ENCODE measurements at regions of chr6 and their contacts with region 1.

Region 1: DNA sequence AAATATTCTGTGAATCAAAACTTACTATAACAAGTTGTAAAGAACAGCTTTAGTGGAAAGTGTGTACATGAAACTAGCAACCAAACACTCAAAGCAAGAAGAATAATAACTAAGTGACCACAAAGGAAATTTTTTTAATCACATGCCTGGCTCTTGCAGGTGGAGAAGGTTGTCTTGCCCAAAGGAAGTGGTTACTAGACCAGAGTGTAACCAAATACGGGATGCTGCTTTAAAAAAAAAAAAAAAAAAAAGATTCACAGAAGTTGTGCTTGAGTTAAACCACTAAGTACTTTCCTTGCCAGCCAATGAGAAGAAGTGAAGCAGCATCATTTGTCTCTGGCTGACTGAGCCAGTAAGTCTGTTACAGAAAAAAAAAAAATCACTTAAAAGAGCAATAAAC is 19.1 kb upstream of the HLA-DQB1 start:
- DNase-seq: peak; percentile 17
- ATAC-seq: peak; percentile 91
- H3K4me3 Mint-ChIP-seq: no peak overlapping the region
- H3K27ac Mint-ChIP-seq: no peak overlapping the region
- H3K4me1 Mint-ChIP-seq: peaks cover 25% of the 10 kb centered on the region
- H3K27me3 Mint-ChIP-seq: no peaks in the 10 kb centered on the region

Region 2: DNA sequence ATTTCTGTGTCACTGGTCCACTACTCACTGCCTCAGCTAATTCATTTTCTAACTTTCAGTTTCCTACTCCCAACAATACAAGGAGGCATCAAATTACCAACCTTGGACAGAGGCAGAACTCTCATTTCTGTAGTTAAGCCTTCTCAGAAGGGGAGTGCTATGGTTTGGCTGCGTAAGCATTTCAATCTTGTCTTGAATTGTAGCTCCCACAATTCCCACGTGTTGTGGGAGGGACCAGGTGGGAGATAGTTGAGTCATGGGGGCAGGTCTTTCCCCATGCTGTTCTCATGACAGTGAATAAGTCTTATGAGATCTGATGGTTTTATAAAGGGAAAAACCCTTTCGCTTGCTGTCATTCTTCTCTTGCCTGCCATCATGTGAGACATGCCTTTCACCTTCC is 223.0 kb before region 1 on chr6:
- CTCF ChIA-PET with region 1: no interaction called
- POLR2A ChIA-PET with region 1: no interaction called
- intact Hi-C with region 1: loop called in 1 of 2 experiments (anchors 1 kb)
- DNase-seq: peak; percentile 82
- ATAC-seq: peak; percentile 98
- H3K4me3 Mint-ChIP-seq: no peak overlapping the region
- H3K27ac Mint-ChIP-seq: peak overlapping the region; percentile 42
- H3K4me1 Mint-ChIP-seq: peaks cover 6% of the 10 kb centered on the region
- H3K27me3 Mint-ChIP-seq: peaks cover 46% of the 10 kb centered on the region

Region 3: GRCh38 chr6:32609731-32610640 is 75.6 kb before region 1 on chr6:
- CTCF ChIA-PET with region 1: no interaction called
- POLR2A ChIA-PET with region 1: no interaction called
- intact Hi-C with region 1: no loop called
- DNase-seq: peak; percentile 60
- ATAC-seq: peak; percentile 98
- H3K4me3 Mint-ChIP-seq: no peak overlapping the region
- H3K27ac Mint-ChIP-seq: no peak overlapping the region
- H3K4me1 Mint-ChIP-seq: peaks cover 16% of the 10 kb centered on the region
- H3K27me3 Mint-ChIP-seq: peaks cover 6% of the 10 kb centered on the region

Region 4: GRCh38 chr6:32666420-32667300 is 18.9 kb before region 1 on chr6 and contains the start of gene HLA-DQB1:
- CTCF ChIA-PET with region 1: no interaction called
- POLR2A ChIA-PET with region 1: no interaction called
- intact Hi-C with region 1: loop called in 1 of 2 experiments (anchors 1 kb)
- DNase-seq: peak; percentile 60
- ATAC-seq: peak; percentile 81
- H3K4me3 Mint-ChIP-seq: peak within 1 kb of the TSS; percentile 68
- H3K27ac Mint-ChIP-seq: peak within 1 kb of the TSS; percentile 58
- H3K4me1 Mint-ChIP-seq: peaks cover 44% of the 10 kb centered on the region
- H3K27me3 Mint-ChIP-seq: peaks cover 18% of the 10 kb centered on the region
- total RNA-seq, gene HLA-DQB1: 2.3 to 3.1 TPM

Region 5: DNA sequence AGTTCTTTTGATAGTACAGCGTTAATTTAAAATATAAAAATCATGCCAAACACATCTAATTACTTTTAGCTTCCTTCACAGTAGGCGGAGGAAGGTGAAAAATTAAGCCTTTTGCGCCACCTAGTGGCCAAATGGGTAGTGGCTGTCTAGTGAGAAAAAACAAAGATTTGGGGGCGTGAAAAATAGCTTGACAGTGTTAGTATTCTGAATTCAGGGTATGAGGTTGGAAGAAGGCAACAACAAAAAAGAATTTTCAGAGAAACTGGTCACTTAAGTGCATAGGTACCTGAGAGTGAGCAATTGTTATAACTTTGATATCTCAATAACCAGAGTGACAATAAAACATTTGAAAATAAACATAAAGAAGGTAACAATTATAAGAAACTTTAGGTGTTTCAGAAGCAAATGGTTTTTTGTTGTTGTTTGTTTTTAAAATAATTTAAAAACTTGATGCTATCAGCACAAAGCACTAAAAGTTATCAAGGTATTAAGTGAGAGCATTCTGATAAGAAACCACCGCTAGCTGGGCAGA is 182.7 kb after region 1 on chr6:
- CTCF ChIA-PET with region 1: no interaction called
- POLR2A ChIA-PET with region 1: no interaction called
- intact Hi-C with region 1: no loop called
- DNase-seq: peak; percentile 92
- ATAC-seq: peak; percentile 73
- H3K4me3 Mint-ChIP-seq: no peak overlapping the region
- H3K27ac Mint-ChIP-seq: no peak overlapping the region
- H3K4me1 Mint-ChIP-seq: peaks cover 35% of the 10 kb centered on the region
- H3K27me3 Mint-ChIP-seq: peaks cover 8% of the 10 kb centered on the region

Measured in activated CD4-positive, alpha-beta T cell treated with anti-CD3 and anti-CD28 coated beads for 36 hours (primary cell).